Calu3 (cell line): ENCODE measurements at regions of chr22 and their contacts with region 1.

Region 1: DNA sequence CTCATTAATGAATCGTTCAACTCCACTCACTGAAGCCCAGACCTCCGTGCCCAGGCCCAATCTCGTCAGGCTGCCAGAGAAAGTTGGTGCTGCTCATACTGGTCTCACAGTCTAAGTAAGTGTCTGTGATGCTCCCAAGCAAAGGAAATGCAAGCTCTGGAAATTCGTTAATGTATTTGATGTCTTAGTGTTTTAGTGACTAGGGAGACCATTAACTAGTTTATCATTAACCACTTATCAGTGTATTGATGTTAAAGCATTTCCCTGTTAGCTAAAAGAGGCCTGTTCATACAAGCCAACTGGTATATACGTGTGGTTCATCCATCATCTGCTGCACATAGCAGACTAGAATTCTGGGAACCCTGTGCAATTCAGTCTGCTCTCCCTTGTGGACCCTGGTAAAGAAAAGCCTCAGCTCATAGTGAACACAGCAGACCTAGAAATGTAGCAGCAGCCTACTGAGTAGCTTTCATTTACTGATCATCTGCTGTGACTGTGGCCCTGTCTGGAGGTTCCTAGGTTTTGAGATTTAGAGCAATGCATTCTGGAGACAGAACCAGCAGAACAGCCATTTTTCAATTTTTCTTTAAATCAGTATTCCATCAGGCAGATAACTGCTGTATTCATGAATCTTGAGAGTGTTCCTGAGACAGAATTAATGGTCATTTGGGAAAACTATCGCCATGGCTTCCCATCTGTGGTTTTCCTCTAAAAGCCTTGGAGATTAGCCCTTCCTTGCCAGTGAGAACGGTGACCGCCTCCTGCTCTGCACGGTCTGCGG is 15.7 kb upstream of the AIFM3 start:
- DNase-seq: no peak
- H3K4me3 Mint-ChIP-seq: peak overlapping the region; percentile 44
- H3K27ac Mint-ChIP-seq: peak overlapping the region; percentile 71
- H3K4me1 Mint-ChIP-seq: peaks cover 63% of the 10 kb centered on the region
- H3K27me3 Mint-ChIP-seq: no peaks in the 10 kb centered on the region
- CTCF ChIP-seq: no peak

Region 2: GRCh38 chr22:20937031-20937793 is 14.1 kb before region 1 on chr22:
- CTCF ChIA-PET with region 1: interaction called, 17 read pairs
- intact Hi-C with region 1: no loop called
- DNase-seq: no peak
- H3K4me3 Mint-ChIP-seq: peak overlapping the region; percentile 70
- H3K27ac Mint-ChIP-seq: peak overlapping the region; percentile 67
- H3K4me1 Mint-ChIP-seq: peaks cover 53% of the 10 kb centered on the region
- H3K27me3 Mint-ChIP-seq: no peaks in the 10 kb centered on the region
- CTCF ChIP-seq: no peak